ENCODE measurements at regions of chr1 and their contacts with region 1.

Region 1: DNA sequence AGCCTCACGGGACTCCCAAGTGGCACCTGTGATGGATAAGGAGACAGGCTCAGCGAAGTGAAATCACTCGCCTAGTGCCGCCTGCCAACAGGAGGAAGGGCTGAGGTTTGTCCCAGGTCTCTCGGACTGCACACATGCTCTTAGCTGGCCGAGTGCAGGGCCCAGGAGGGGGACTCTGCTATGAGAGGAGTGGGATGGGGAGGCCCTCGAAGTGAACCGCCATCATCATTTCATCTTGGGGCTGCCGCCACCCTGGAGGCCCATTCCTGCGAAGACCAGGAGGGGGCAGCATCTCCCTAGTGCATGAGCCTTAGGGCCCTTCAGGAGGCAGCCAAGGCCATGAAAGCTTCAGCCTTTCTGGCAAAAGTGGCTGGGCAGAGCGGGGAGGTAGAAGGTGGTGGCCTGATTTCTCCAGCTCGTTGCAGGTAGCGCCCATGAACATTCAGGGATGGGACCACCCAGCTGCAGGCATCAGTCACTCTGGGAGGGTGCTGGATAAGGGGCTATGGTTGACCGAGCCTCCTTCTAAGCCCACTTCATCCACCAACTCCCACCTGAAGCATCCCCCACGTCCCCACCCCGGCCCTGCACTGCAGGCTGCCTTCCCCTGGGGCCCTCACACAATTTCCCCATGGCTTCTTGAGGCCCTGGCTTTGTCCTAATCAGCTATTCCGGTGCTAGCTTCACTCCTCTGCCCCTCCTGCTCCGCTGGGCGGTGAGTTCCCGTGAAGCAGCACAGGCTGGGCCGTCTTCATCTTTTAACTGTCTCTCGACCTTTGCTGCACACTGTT is 17.2 kb upstream of the RASSF5 start:
- DNase-seq: peak; percentile 89
- H3K4me3 Mint-ChIP-seq: no peak overlapping the region
- H3K27ac Mint-ChIP-seq: no peak overlapping the region
- H3K4me1 Mint-ChIP-seq: no peaks in the 10 kb centered on the region
- H3K27me3 Mint-ChIP-seq: no peaks in the 10 kb centered on the region
- CTCF ChIP-seq: peak; percentile 100

Region 2: GRCh38 chr1:206461602-206462455 is 28.3 kb before region 1 on chr1:
- CTCF ChIA-PET with region 1: interaction called, 19 read pairs
- POLR2A ChIA-PET with region 1: interaction called, 3 read pairs
- intact Hi-C with region 1: no loop called
- DNase-seq: peak; percentile 89
- H3K4me3 Mint-ChIP-seq: no peak overlapping the region
- H3K27ac Mint-ChIP-seq: peak overlapping the region; percentile 16
- H3K4me1 Mint-ChIP-seq: peaks cover 30% of the 10 kb centered on the region
- H3K27me3 Mint-ChIP-seq: peaks cover 8% of the 10 kb centered on the region
- CTCF ChIP-seq: peak; percentile 98

Region 3: GRCh38 chr1:206479183-206480125 is 10.7 kb before region 1 on chr1:
- CTCF ChIA-PET with region 1: interaction called, 126 read pairs
- POLR2A ChIA-PET with region 1: interaction called, 4 read pairs
- intact Hi-C with region 1: no loop called
- DNase-seq: peak; percentile 93
- H3K4me3 Mint-ChIP-seq: no peak overlapping the region
- H3K27ac Mint-ChIP-seq: no peak overlapping the region
- H3K4me1 Mint-ChIP-seq: peaks cover 29% of the 10 kb centered on the region
- H3K27me3 Mint-ChIP-seq: no peaks in the 10 kb centered on the region
- CTCF ChIP-seq: peak; percentile 97

Region 4: GRCh38 chr1:206513312-206514111 is 23.3 kb after region 1 on chr1:
- CTCF ChIA-PET with region 1: interaction called, 16 read pairs
- POLR2A ChIA-PET with region 1: interaction called, 7 read pairs
- intact Hi-C with region 1: no loop called
- DNase-seq: peak; percentile 100
- H3K4me3 Mint-ChIP-seq: peak overlapping the region; percentile 59
- H3K27ac Mint-ChIP-seq: peak overlapping the region; percentile 99
- H3K4me1 Mint-ChIP-seq: peaks cover 73% of the 10 kb centered on the region
- H3K27me3 Mint-ChIP-seq: no peaks in the 10 kb centered on the region
- CTCF ChIP-seq: no peak

Region 5: DNA sequence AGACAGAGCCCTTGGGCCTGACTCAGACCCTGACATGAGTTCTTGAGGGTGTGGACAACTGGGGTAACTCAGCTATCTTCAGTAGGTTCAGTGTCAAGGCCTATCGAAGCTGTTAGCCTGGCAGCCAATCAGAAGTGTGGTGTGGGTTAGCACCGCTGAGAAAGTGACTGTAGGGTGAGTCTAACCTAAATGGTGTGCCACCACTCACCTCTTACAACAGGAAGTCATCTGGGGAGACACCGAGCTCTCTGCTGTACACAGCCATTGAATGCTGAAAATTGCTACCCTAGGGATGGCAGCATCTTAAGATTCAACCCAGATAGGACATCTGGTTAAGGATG is 61.8 kb after region 1 on chr1:
- CTCF ChIA-PET with region 1: interaction called, 145 read pairs
- POLR2A ChIA-PET with region 1: interaction called, 3 read pairs
- intact Hi-C with region 1: no loop called
- DNase-seq: no peak
- H3K4me3 Mint-ChIP-seq: no peak overlapping the region
- H3K27ac Mint-ChIP-seq: no peak overlapping the region
- H3K4me1 Mint-ChIP-seq: no peaks in the 10 kb centered on the region
- H3K27me3 Mint-ChIP-seq: no peaks in the 10 kb centered on the region
- CTCF ChIP-seq: no peak

Region 6: GRCh38 chr1:206563367-206564207 is 73.4 kb after region 1 on chr1:
- CTCF ChIA-PET with region 1: interaction called, 851 read pairs
- POLR2A ChIA-PET with region 1: no interaction called
- intact Hi-C with region 1: no loop called
- DNase-seq: no peak
- H3K4me3 Mint-ChIP-seq: no peak overlapping the region
- H3K27ac Mint-ChIP-seq: no peak overlapping the region
- H3K4me1 Mint-ChIP-seq: no peaks in the 10 kb centered on the region
- H3K27me3 Mint-ChIP-seq: no peaks in the 10 kb centered on the region
- CTCF ChIP-seq: no peak

Region 7: GRCh38 chr1:206600527-206600926 is 110.4 kb after region 1 on chr1:
- CTCF ChIA-PET with region 1: interaction called, 33 read pairs
- POLR2A ChIA-PET with region 1: no interaction called
- intact Hi-C with region 1: no loop called
- DNase-seq: no peak
- H3K4me3 Mint-ChIP-seq: no peak overlapping the region
- H3K27ac Mint-ChIP-seq: no peak overlapping the region
- H3K4me1 Mint-ChIP-seq: no peaks in the 10 kb centered on the region
- H3K27me3 Mint-ChIP-seq: no peaks in the 10 kb centered on the region
- CTCF ChIP-seq: no peak